Activated T-helper 1 cell treated with anti-CD3 and anti-CD28 coated beads, Interleukin-12 subunit alpha, Interleukin-12 subunit beta, Interleukin-2, Interleukin-4 antibody, amounts not matched to agents 30 ng/mL and 10 ng/mL and 1 ng/mL, durations not matched to agents 14 hours and 24 hours and 36 hours (primary cell): ENCODE measurements at regions of chr4 and their contacts with region 1.

Region 1: GRCh38 chr4:114072781-114073180 is 93.3 kb upstream of the ARSJ start:
- DNase-seq: no peak
- H3K4me3 Mint-ChIP-seq: no peak overlapping the region
- H3K27ac Mint-ChIP-seq: no peak overlapping the region
- H3K4me1 Mint-ChIP-seq: no peaks in the 10 kb centered on the region
- H3K27me3 Mint-ChIP-seq: peaks cover 30% of the 10 kb centered on the region

Region 2: DNA sequence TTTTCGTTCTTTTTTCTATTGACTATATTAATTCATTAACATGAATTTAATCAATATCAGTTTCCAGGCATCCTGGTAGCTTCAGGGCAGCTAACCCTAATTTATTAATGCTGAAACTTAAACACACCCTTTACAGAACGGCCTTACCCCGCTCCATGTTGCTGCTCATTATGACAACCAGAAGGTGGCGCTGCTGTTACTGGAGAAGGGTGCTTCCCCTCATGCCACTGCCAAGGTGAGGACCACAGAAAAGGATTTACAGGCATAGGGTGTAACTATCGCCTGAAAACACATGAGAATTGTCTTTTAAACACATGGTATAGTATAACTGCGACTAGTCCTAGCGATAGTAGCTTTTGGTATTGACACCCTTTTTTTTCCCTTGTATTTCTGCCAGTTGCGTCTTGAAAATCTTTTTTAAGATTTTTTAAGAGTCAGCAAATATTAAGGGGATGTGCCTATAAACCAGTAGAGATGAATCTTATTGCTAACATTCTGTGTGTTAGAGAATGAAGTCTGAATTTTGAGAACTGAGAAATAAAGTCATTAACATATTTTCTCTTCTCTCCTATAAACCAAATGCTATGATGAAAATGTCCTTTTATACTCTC is 794.4 kb before region 1 on chr4:
- intact Hi-C with region 1: loop called (anchors 1 kb)
- DNase-seq: peak; percentile 31
- H3K4me3 Mint-ChIP-seq: no peak overlapping the region
- H3K27ac Mint-ChIP-seq: no peak overlapping the region
- H3K4me1 Mint-ChIP-seq: no peaks in the 10 kb centered on the region
- H3K27me3 Mint-ChIP-seq: peaks cover 6% of the 10 kb centered on the region

Region 3: GRCh38 chr4:113781439-113782040 is 291.2 kb before region 1 on chr4:
- intact Hi-C with region 1: loop called (anchors 5 kb)
- DNase-seq: no peak
- H3K4me3 Mint-ChIP-seq: no peak overlapping the region
- H3K27ac Mint-ChIP-seq: no peak overlapping the region
- H3K4me1 Mint-ChIP-seq: peaks cover 10% of the 10 kb centered on the region
- H3K27me3 Mint-ChIP-seq: no peaks in the 10 kb centered on the region

Region 4: DNA sequence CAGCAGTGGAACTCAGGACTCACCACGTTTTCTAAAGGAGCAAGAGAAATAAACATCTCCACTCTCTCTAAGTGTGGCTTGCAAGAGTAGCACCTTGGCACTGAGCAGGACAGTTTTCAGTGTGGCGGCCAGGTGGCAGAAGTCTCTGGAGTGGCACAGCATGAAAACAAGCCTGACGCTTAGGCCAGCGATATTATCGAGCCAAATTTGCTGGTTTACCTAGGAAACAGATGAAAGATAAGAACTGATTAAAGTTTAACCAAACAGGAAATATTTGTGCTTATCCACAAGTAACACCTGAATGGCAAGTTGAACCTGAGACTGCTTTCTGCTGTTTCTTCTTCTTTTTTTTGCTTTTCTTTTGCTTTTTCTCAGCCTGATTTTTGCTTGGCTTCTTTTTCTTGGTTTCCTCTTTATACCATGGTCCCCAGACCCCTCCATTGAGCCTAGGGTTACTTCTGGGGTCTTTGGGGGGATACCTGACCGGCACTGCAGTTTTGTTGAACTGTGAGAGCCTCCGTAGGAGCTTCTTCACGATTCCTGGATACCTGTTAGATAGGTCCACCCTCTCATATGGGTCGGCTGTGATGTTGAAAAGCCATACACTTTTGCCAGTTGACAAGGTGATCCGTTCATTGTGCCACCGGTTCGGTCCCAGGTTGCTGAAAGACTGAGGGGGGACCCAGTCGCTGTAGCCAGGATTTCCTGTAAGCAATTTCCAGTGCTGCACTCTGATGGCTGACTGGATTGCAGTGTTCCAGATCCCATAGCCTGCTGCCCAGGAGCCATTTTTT is 170.6 kb before region 1 on chr4:
- intact Hi-C with region 1: loop called (anchors 2 kb)
- DNase-seq: peak; percentile 10
- H3K4me3 Mint-ChIP-seq: peak overlapping the region; percentile 22
- H3K27ac Mint-ChIP-seq: no peak overlapping the region
- H3K4me1 Mint-ChIP-seq: peaks cover 36% of the 10 kb centered on the region
- H3K27me3 Mint-ChIP-seq: no peaks in the 10 kb centered on the region

Region 5: GRCh38 chr4:113952452-113953029 is 120.2 kb before region 1 on chr4:
- intact Hi-C with region 1: loop called (anchors 1 kb)
- DNase-seq: peak; percentile 0
- H3K4me3 Mint-ChIP-seq: no peak overlapping the region
- H3K27ac Mint-ChIP-seq: no peak overlapping the region
- H3K4me1 Mint-ChIP-seq: no peaks in the 10 kb centered on the region
- H3K27me3 Mint-ChIP-seq: peaks cover 8% of the 10 kb centered on the region

Region 6: DNA sequence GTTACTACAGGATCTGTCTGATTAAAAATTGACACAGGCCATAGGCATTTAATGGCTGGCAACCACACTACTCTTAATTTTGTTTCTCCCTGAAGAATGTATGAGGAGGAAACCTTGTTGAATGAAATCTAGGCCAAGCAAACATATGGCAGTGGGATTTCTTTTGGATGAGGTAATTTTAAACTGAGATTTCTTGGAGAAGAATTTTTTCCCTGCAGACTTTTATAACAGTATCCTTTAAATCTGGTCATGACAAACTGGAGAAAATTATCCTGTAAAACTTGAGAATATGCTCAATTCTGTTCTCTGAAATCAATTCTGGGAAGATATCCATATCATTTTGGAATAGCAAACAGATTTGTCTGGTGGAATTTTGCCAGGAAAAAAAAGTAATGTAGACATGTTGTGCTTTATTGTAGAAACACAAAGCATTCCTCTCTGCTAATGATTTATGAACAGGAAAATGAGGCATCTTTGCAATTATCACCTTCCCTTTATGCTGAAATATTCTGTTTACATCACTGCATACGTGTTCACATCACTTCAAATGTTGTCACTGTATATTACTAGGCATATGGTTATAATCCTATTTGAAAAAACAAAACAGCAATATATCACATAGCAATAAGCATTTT is 14.9 kb after region 1 on chr4:
- intact Hi-C with region 1: no loop called
- DNase-seq: no peak
- H3K4me3 Mint-ChIP-seq: no peak overlapping the region
- H3K27ac Mint-ChIP-seq: no peak overlapping the region
- H3K4me1 Mint-ChIP-seq: no peaks in the 10 kb centered on the region
- H3K27me3 Mint-ChIP-seq: peaks cover 2% of the 10 kb centered on the region

Region 7: GRCh38 chr4:114334884-114335330 is 262.1 kb after region 1 on chr4:
- intact Hi-C with region 1: no loop called
- DNase-seq: no peak
- H3K4me3 Mint-ChIP-seq: no peak overlapping the region
- H3K27ac Mint-ChIP-seq: no peak overlapping the region
- H3K4me1 Mint-ChIP-seq: no peaks in the 10 kb centered on the region
- H3K27me3 Mint-ChIP-seq: no peaks in the 10 kb centered on the region

Region 8: GRCh38 chr4:114361249-114361648 is 288.5 kb after region 1 on chr4:
- intact Hi-C with region 1: no loop called
- DNase-seq: no peak
- H3K4me3 Mint-ChIP-seq: no peak overlapping the region
- H3K27ac Mint-ChIP-seq: no peak overlapping the region
- H3K4me1 Mint-ChIP-seq: no peaks in the 10 kb centered on the region
- H3K27me3 Mint-ChIP-seq: peaks cover 5% of the 10 kb centered on the region